KBM-7 (cell line): ENCODE measurements at regions of chr3 and their contacts with region 1.

Region 1: DNA sequence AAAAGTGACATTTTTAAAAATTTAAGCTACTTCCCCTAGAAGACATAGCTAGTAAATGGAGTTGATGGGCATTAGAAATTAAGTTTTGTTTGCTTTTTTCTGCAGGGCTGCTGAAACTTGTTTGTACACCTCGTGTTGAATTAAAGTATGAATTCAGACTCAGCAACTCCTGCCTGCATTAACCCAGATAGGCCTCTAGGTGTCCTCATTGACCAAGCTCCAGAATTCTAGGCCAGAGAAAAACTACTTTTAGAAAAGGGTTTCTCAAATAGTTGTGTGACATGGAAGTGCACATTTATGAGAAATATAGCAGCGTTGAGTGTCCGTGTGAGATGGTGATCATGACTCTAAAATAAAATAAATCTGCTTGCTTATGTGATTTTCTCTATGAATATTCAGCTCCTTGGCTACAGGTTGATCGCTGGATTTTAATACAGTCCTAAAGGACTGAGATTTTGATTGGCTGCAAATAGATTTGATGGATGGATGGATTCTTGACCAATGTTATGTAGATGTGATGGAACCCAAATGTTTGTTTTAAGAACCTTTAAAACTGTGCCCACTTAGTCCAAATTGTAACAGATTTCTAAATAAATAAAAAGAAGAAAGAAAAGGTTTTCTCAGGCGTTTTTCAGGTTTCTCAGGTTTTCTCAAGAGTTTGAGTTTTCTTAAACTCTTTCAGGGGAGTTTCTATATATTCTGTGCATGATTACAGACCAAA is 39.4 kb upstream of the LMOD3 start:
- DNase-seq: peak; percentile 65

Region 2: DNA sequence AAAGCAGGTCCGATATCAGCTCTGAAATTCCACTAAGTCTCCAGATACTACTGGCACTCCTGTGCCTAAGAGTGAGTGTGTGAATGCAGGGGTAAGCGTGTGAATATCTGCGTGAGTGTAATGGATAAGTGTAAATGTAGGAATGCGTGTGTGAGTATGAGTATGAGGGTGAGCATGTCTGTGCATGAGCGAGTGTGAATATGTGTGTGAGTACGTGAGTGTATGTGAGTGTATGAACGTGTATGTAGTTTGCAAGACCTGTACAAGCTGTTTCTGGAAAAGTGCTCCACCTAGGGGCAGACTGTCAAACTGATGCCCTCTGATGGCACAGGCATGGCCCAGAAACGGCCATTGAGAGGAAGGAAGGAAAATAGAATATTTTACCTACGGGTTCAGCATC is 248.5 kb after region 1 on chr3:
- in situ Hi-C with region 1: loop called (anchors 25 kb)
- DNase-seq: peak; percentile 81

Region 3: DNA sequence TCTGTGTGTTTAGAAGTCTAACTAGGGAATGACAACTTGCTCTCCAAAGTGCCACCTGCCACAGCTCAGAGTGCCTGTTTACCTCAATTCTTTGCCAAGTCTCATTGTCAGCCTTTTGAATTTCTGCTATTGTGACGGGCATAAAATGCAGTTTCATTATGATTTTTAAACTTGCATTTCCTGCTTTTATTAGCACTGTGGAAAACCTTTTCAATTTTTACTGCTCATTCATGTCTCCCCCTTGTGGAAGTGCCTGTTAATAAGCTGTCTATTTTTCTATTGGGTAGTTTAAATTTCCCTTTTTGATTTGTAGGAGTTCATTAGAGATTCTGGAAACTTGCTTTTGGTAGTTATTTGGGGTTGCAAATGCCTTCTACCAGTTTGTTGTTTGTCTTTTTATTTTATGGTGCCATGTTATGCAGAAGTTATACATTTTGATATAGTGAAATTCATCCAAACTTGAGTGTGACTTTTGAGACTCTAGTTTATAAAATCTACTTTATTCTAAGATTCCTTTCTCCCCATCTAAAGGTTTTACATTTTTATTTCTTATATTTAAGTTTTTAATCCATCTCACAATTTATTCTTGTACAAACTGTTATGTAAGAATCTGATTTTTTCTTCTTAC is 278.0 kb after region 1 on chr3:
- in situ Hi-C with region 1: no loop called
- DNase-seq: peak; percentile 28